Dorsolateral prefrontal cortex (tissue), 120 donors: ENCODE measurements at regions of chr18 and their contacts with region 1.

Region 1: GRCh38 chr18:27605107-27605834 is 420.2 kb upstream of the CHST9 start:
- DNase-seq: peak in 9 of 10 donors; percentile 50 to 81 (median 63)
- H3K4me3 ChIP-seq: no peak overlapping the region
- H3K27ac ChIP-seq: peak overlapping the region in 1 of 59 donors; percentile 10
- H3K27me3 ChIP-seq: no peaks in the 10 kb centered on the region
- CTCF ChIP-seq: peak; percentile 62 to 94 (median 88)

Region 2: GRCh38 chr18:27483276-27483675 is 122.0 kb before region 1 on chr18:
- intact Hi-C with region 1: no loop called
- DNase-seq: no peak
- H3K4me3 ChIP-seq: no peak overlapping the region
- H3K27ac ChIP-seq: no peak overlapping the region
- H3K27me3 ChIP-seq: no peaks in the 10 kb centered on the region
- CTCF ChIP-seq: no peak

Region 3: GRCh38 chr18:27695503-27695902 is 90.2 kb after region 1 on chr18:
- intact Hi-C with region 1: no loop called
- DNase-seq: no peak
- H3K4me3 ChIP-seq: no peak overlapping the region
- H3K27ac ChIP-seq: no peak overlapping the region
- H3K27me3 ChIP-seq: no peaks in the 10 kb centered on the region
- CTCF ChIP-seq: no peak

Region 4: DNA sequence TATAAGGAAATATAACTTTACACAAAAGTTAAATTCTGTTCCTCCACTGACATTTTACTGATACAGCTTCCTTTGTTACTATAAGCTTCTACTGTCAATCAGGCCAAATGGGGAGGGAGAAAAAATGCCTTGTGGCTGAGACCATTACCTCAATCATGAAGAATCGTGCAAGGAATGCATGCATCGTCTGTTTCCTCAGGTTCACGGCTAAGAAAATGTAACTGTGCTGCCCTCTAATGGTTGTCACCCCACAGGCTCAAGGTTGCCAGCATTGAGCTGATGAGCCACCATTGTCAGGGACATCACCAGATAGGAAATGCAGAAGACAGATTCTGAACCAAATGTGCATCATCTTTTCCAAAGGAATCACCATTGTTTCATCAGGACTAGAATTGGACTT is 144.7 kb after region 1 on chr18:
- intact Hi-C with region 1: loop called in 1 of 2 experiments (anchors 2 kb)
- DNase-seq: peak in 2 of 10 donors; percentile 39 to 47
- H3K4me3 ChIP-seq: no peak overlapping the region
- H3K27ac ChIP-seq: no peak overlapping the region
- H3K27me3 ChIP-seq: no peaks in the 10 kb centered on the region
- CTCF ChIP-seq: peak; percentile 27 to 74 (median 56)

Region 5: GRCh38 chr18:28176933-28177827 is 571.9 kb after region 1 on chr18 and contains the start of gene CDH2:
- intact Hi-C with region 1: no loop called
- DNase-seq: peak; percentile 46 to 78 (median 74)
- H3K4me3 ChIP-seq: peak within 1 kb of the TSS; percentile 65 to 92 (median 80)
- H3K27ac ChIP-seq: peak within 1 kb of the TSS; percentile 80 to 98 (median 96)
- H3K27me3 ChIP-seq: no peaks in the 10 kb centered on the region
- CTCF ChIP-seq: peak in 29 of 56 donors; percentile 8 to 42 (median 25)
- total RNA-seq, gene CDH2: 44.8 to 109 (median 82.2) TPM